ENCODE measurements at regions of chr5 and their contacts with region 1.

Region 1: GRCh38 chr5:133868946-133869518 is 99.4 kb downstream of the C5orf15 start:
- DNase-seq: peak; percentile 88
- H3K4me3 Mint-ChIP-seq: no peak overlapping the region
- H3K27ac Mint-ChIP-seq: no peak overlapping the region
- H3K4me1 Mint-ChIP-seq: peaks cover 24% of the 10 kb centered on the region
- H3K27me3 Mint-ChIP-seq: peaks cover 6% of the 10 kb centered on the region

Region 2: DNA sequence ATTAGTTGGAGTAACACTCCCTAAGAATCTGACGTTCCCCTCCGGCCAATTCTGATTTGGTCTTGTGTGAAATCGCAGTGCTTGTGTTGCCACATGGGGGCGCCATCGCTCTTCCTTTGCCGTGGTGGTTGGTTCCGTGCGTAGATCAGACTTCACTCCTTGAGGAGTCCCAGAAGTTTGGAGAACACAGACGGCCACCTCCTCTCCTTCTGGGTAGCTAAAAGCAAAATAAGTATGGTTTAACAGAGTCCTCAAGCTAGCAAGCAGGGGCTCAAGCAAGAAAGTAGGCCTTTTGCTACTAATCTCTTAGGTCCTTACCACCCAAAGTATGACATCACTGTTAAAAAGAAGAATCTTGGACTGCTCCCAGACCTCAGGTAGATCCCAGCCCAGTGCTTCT is 757.7 kb before region 1 on chr5:
- CTCF ChIA-PET with region 1: interaction called, 10 read pairs
- POLR2A ChIA-PET with region 1: no interaction called
- intact Hi-C with region 1: loop called (anchors 5 kb)
- DNase-seq: peak; percentile 87
- H3K4me3 Mint-ChIP-seq: no peak overlapping the region
- H3K27ac Mint-ChIP-seq: no peak overlapping the region
- H3K4me1 Mint-ChIP-seq: peaks cover 33% of the 10 kb centered on the region
- H3K27me3 Mint-ChIP-seq: no peaks in the 10 kb centered on the region

Region 3: DNA sequence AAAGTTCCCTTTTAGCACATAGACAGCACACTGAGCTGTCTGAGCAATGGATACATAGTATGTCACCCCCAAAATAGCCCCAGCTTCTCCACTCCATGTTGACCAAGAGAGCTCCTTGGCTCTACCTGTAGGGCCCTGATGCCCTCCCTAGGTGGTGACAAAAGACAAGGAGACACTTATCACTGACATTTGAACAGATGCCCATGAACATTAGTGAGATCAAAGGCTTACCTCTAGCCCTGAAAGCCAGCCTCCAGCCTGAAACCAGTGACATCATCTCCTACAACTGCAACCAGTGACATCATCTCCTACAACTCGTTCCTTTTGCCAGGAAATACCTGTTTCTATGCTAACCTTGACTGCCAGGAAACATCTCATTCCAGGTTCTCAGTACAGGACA is 379.4 kb before region 1 on chr5:
- CTCF ChIA-PET with region 1: no interaction called
- POLR2A ChIA-PET with region 1: no interaction called
- intact Hi-C with region 1: loop called (anchors 1 kb)
- DNase-seq: peak; percentile 49
- H3K4me3 Mint-ChIP-seq: no peak overlapping the region
- H3K27ac Mint-ChIP-seq: no peak overlapping the region
- H3K4me1 Mint-ChIP-seq: peaks cover 5% of the 10 kb centered on the region
- H3K27me3 Mint-ChIP-seq: no peaks in the 10 kb centered on the region

Region 4: GRCh38 chr5:133698646-133699526 is 170.1 kb before region 1 on chr5:
- CTCF ChIA-PET with region 1: no interaction called
- POLR2A ChIA-PET with region 1: no interaction called
- intact Hi-C with region 1: loop called (anchors 5 kb)
- DNase-seq: no peak
- H3K4me3 Mint-ChIP-seq: no peak overlapping the region
- H3K27ac Mint-ChIP-seq: peak overlapping the region; percentile 77
- H3K4me1 Mint-ChIP-seq: peaks cover 20% of the 10 kb centered on the region
- H3K27me3 Mint-ChIP-seq: peaks cover 4% of the 10 kb centered on the region

Region 5: DNA sequence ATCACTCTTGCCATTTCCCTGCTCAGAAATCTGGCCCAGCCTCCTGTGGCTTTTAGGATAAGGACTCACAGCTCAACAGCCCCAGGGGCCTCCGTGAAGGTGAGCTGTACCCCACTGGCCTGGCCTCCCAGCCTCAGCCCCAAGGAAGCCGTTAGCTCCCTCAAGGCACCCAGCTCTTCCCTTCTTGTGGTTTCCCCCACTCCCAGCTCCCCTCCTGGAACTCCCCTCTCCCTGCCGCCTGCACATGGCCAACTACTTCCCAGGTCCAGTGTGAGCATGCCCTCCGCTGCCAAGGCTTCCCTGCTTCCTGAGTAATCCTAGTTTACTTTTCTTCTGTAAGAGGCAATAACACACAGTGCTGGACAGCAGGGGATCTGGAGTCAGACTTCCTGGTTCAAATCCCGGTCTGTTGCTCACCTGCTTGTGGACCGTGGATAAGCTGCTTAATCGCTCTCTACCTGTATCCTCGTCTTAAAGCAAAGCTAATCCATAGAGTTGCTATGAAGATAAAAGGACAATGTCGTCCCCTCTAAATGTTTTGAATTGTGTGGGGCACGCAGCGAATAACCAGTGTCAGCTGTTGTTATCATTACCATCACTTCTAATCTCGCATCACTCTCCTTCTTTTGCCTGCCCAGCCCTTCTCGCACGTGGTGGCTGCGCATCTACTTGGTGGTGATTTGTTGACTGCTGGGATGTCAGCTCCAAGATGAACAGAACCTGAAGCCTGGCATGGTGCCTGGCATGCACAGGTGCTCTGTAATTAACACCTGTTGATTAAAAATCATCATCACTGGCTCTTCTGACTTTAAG is 12.8 kb after region 1 on chr5:
- CTCF ChIA-PET with region 1: interaction called, 18 read pairs
- POLR2A ChIA-PET with region 1: no interaction called
- intact Hi-C with region 1: no loop called
- DNase-seq: no peak
- H3K4me3 Mint-ChIP-seq: no peak overlapping the region
- H3K27ac Mint-ChIP-seq: no peak overlapping the region
- H3K4me1 Mint-ChIP-seq: peaks cover 5% of the 10 kb centered on the region
- H3K27me3 Mint-ChIP-seq: peaks cover 4% of the 10 kb centered on the region

Region 6: DNA sequence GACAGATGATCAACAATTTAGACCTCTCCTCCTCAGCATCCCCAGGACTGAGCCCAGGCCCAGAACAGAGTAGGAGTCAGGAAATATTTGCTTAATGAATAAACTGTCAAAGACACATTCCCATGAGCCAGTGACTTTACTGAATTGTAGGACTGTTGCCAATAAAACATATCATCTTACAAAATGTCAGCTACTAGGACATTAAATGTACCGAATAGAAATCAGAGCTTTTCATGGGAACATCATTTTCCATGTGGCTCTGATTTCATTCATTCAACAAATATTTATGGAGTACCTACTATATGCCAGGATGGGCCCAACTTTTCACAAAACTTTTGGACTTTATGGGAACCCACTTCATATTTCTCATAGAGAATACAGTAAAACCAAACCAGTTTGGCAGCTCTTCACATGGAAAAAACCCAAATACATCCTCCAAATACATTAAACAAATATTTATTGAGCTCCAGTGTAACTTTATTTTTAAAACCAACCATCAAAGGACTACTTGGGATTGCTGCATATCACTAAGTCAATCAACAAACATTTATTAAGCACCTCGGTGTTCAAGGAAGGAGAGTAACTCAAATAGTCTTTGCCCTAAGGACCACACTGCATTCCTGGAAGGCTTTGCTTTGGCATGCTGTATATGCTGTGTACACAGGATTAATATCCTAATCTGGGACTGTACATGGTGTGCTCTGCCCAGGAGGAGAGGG is 124.4 kb after region 1 on chr5:
- CTCF ChIA-PET with region 1: no interaction called
- POLR2A ChIA-PET with region 1: no interaction called
- intact Hi-C with region 1: no loop called
- DNase-seq: no peak
- H3K4me3 Mint-ChIP-seq: no peak overlapping the region
- H3K27ac Mint-ChIP-seq: no peak overlapping the region
- H3K4me1 Mint-ChIP-seq: peaks cover 34% of the 10 kb centered on the region
- H3K27me3 Mint-ChIP-seq: no peaks in the 10 kb centered on the region

Region 7: GRCh38 chr5:134026521-134027268 is 157.7 kb after region 1 on chr5:
- CTCF ChIA-PET with region 1: no interaction called
- POLR2A ChIA-PET with region 1: no interaction called
- intact Hi-C with region 1: no loop called
- DNase-seq: peak; percentile 64
- H3K4me3 Mint-ChIP-seq: no peak overlapping the region
- H3K27ac Mint-ChIP-seq: no peak overlapping the region
- H3K4me1 Mint-ChIP-seq: no peaks in the 10 kb centered on the region
- H3K27me3 Mint-ChIP-seq: no peaks in the 10 kb centered on the region

Region 8: GRCh38 chr5:134161513-134162395 is 292.7 kb after region 1 on chr5:
- CTCF ChIA-PET with region 1: no interaction called
- POLR2A ChIA-PET with region 1: no interaction called
- intact Hi-C with region 1: no loop called
- DNase-seq: no peak
- H3K4me3 Mint-ChIP-seq: no peak overlapping the region
- H3K27ac Mint-ChIP-seq: peak overlapping the region; percentile 72
- H3K4me1 Mint-ChIP-seq: peaks cover 35% of the 10 kb centered on the region
- H3K27me3 Mint-ChIP-seq: no peaks in the 10 kb centered on the region

Measured in activated CD4-positive, alpha-beta memory T cell treated with anti-CD3 and anti-CD28 coated beads for 36 hours (primary cell).